Right ventricle myocardium inferior (tissue), 1 donor: ENCODE measurements at regions of chr12 and their contacts with region 1.

Region 1: DNA sequence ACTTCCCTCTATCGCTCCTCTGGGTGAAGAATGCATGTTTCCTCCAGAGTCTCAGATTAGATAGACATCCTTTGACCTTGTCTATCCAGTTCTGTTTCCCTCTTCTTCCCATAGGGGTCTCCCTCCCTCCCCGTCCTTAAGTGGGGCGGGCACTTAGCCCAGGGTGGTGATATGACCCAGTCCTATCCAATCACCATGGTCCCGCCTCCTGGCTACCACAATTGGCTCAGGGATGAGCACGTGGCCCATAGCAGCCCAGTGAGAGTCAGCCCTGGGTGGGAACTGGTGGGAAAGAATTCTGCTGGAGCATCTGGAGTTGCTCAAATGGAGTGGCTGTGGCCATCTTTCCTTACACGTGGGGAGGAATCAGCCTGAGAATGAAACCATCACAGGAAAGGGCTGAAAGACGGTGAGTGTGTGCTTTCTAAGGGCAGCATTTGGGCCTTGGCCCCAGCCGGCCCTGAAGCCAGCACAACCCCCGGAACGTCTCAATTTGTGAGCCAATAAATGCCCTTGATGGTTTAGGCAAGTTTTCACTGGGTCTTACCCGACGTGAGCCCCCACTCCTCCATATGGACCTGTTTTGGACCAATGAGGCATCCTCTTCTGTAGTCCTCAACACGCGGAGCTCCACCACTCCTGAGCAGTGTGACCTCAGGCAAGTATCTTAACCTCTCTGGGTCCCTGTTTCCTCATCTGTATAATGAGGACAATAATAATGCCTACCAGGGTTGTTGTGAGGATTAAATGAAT is 14.4 kb upstream of the MLXIP start:
- DNase-seq: peak; percentile 93
- ATAC-seq: peak; percentile 91

Region 2: GRCh38 chr12:122107261-122107660 is 43.1 kb after region 1 on chr12:
- intact Hi-C with region 1: loop called (anchors 5 kb)
- DNase-seq: no peak
- ATAC-seq: no peak